ENCODE measurements at regions of chr3 and their contacts with region 1.

Region 1: GRCh38 chr3:104909198-104909597 is 457.5 kb upstream of the ALCAM start:
- DNase-seq: no peak
- ATAC-seq: no peak
- H3K4me3 ChIP-seq: no peak overlapping the region
- H3K27ac ChIP-seq: peak overlapping the region in 1 of 2 donors; percentile 38
- H3K4me1 ChIP-seq: peaks cover 0 to 5% of the 10 kb centered on the region in 2 donors
- H3K27me3 ChIP-seq: no peaks in the 10 kb centered on the region

Region 2: DNA sequence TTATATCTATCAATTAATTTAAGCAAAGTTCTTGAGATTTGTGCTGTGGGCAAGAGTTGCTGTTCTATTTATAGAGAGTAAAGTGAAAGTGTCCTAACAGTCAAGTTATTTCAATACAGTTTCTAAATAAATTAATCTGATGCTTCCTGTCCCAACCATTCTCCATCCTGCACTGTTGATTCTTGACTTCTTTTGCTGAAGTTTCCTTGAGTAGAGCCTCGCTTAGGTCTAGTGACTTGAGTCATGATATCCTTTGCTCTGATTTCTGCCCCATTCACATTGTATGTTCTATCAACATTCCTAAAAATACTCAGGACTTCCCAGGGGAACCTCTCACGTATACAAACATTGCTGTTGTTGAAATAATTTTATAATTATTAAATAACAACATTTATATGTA is 40.9 kb before region 1 on chr3:
- intact Hi-C with region 1: no loop called
- DNase-seq: no peak
- ATAC-seq: no peak
- H3K4me3 ChIP-seq: no peak overlapping the region
- H3K27ac ChIP-seq: no peak overlapping the region
- H3K4me1 ChIP-seq: no peaks in the 10 kb centered on the region
- H3K27me3 ChIP-seq: no peaks in the 10 kb centered on the region

Region 3: DNA sequence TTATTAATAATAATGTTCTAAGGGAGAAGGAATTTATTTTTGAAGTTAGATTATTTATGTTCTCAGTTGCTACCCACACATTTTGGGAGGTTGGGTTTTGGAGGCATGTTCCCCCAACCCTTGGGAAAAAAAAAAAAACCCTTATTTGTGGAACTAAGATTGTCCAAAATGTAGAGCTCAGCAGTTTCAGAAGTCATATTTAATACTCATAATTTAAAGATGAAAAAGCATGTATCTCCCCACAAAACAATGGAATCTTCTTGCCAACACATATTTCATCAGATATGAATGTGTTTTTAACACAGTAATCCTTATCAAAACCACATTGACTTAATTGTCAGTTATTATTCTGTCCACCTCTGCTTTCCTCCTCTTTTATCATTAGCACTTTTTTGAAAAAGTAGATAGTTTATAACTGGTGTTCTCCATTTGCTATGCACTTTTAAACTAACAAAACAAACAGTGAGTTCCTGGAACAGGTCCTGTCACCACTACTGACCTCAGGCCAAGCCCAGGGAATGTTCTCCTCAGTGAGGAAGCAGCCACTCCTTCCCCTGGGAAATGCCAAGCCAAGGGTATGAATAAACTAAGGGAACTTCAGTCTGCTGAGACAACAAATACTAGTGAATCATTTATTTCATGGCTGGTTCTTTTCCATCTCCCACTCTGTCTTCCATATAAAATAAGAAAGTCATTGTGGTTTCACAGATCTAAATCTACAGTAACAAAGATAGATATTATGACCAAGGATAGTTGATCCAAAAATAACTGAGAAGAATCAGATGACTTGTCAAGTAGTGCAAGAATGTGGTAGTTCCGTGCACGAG is 43.2 kb after region 1 on chr3:
- intact Hi-C with region 1: no loop called
- DNase-seq: no peak
- ATAC-seq: no peak
- H3K4me3 ChIP-seq: no peak overlapping the region
- H3K27ac ChIP-seq: no peak overlapping the region
- H3K4me1 ChIP-seq: no peaks in the 10 kb centered on the region
- H3K27me3 ChIP-seq: no peaks in the 10 kb centered on the region

Region 4: DNA sequence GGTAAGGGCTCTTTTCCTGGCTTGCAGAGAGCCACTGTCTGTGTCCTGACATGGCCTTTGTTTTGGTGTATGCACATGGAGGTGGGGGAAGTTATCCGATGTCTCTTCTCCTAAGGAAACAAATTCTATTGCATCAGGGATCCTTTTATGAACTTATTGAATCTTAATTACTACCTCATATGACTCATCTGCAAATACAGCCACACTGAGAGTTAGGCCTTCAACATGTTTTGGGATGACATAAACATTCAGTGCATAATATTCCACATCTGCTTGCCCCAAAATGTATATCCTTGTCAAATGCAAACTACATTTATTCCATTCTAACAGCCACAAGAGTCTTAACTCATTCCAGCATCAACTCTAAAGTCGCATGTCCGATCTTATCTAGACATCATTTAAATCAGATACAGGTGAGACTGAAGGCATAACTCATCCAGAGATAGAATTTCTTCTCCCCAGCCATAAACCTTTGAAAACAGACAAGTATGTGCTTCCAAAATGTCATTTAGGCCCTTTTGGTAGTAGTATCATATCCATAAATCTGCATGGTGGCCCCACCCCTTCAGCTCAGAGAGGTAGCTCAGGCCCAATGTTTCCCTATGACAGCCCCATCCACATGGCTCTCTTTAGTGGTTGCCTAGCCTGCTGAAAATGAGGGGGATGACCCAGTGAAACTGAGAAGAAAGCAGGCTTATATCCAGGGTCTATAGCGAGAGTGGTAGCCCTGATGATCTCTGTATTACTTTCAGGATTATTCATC is 168.0 kb after region 1 on chr3:
- intact Hi-C with region 1: no loop called
- DNase-seq: no peak
- ATAC-seq: no peak
- H3K4me3 ChIP-seq: no peak overlapping the region
- H3K27ac ChIP-seq: no peak overlapping the region
- H3K4me1 ChIP-seq: no peaks in the 10 kb centered on the region
- H3K27me3 ChIP-seq: no peaks in the 10 kb centered on the region

Region 5: GRCh38 chr3:105199217-105199616 is 290.0 kb after region 1 on chr3:
- intact Hi-C with region 1: no loop called
- DNase-seq: no peak
- ATAC-seq: no peak
- H3K4me3 ChIP-seq: no peak overlapping the region
- H3K27ac ChIP-seq: no peak overlapping the region
- H3K4me1 ChIP-seq: no peaks in the 10 kb centered on the region
- H3K27me3 ChIP-seq: no peaks in the 10 kb centered on the region

Region 6: GRCh38 chr3:105353485-105354161 is 444.4 kb after region 1 on chr3:
- intact Hi-C with region 1: loop called in 1 of 2 experiments (anchors 5 kb)
- DNase-seq: peak; percentile 72 to 75
- ATAC-seq: peak; percentile 76
- H3K4me3 ChIP-seq: peak overlapping the region; percentile 29 to 54
- H3K27ac ChIP-seq: peak overlapping the region in 1 of 2 donors; percentile 42
- H3K4me1 ChIP-seq: peaks cover 0 to 4% of the 10 kb centered on the region in 2 donors
- H3K27me3 ChIP-seq: no peaks in the 10 kb centered on the region